CD8-positive, alpha-beta T cell (primary cell): ENCODE measurements at regions of chr2 and their contacts with region 1.

Region 1: GRCh38 chr2:28958689-28959088 is 22.4 kb upstream of the TOGARAM2 start:
- DNase-seq: peak in 8 of 9 experiments; percentile 15 to 78 (median 37)
- ATAC-seq: peak; percentile 56
- H3K4me3 ChIP-seq: no peak overlapping the region
- H3K4me3 Mint-ChIP-seq: no peak overlapping the region
- H3K27ac ChIP-seq: no peak overlapping the region
- H3K27ac Mint-ChIP-seq: no peak overlapping the region
- H3K4me1 ChIP-seq: no peaks in the 10 kb centered on the region
- H3K4me1 Mint-ChIP-seq: peaks cover 8% of the 10 kb centered on the region
- H3K27me3 ChIP-seq: no peaks in the 10 kb centered on the region
- H3K27me3 Mint-ChIP-seq: no peaks in the 10 kb centered on the region
- CTCF ChIP-seq: peak; percentile 75

Region 2: DNA sequence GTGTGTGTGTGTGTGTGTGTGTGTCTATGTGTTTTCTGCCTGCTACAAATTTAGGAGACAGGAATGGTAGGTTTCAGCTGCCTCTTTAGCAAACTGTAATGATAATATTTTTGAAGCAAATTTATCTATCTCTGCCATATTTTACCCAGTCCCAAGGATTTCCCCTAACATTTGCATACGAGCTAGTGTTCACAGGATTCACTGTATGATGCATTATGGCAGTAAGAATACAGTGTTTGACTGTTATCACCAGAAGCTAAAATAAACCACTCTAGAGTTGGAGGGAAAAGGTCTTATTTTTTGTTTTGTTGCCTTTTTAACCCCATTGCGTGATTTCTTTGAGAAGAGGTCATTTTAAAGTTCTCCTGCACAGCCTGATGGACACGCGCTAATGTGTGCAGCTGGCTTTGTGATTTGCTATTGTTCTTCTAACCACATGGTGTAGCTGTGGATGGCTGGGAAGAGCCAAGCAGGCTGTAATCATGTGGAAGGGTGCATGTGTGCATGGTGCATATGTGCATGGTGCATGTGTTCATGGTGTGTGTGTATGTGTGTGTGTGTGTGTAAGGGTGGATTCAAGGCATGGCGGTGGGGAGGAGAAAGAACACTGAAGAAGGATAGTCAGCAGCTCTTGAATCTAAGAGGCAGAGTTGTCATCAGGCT is 400.4 kb before region 1 on chr2:
- CTCF ChIA-PET with region 1: no interaction called
- POLR2A ChIA-PET with region 1: no interaction called
- intact Hi-C with region 1: no loop called
- DNase-seq: no peak
- ATAC-seq: no peak
- H3K4me3 ChIP-seq: no peak overlapping the region
- H3K4me3 Mint-ChIP-seq: no peak overlapping the region
- H3K27ac ChIP-seq: no peak overlapping the region
- H3K27ac Mint-ChIP-seq: no peak overlapping the region
- H3K4me1 ChIP-seq: no peaks in the 10 kb centered on the region
- H3K4me1 Mint-ChIP-seq: no peaks in the 10 kb centered on the region
- H3K27me3 ChIP-seq: no peaks in the 10 kb centered on the region
- H3K27me3 Mint-ChIP-seq: no peaks in the 10 kb centered on the region
- CTCF ChIP-seq: no peak

Region 3: GRCh38 chr2:28764909-28765711 is 193.6 kb before region 1 on chr2:
- CTCF ChIA-PET with region 1: no interaction called
- POLR2A ChIA-PET with region 1: no interaction called
- intact Hi-C with region 1: no loop called
- DNase-seq: no peak
- ATAC-seq: no peak
- H3K4me3 ChIP-seq: no peak overlapping the region
- H3K4me3 Mint-ChIP-seq: no peak overlapping the region
- H3K27ac ChIP-seq: no peak overlapping the region
- H3K27ac Mint-ChIP-seq: no peak overlapping the region
- H3K4me1 ChIP-seq: peaks cover 58% of the 10 kb centered on the region
- H3K4me1 Mint-ChIP-seq: peaks cover 89% of the 10 kb centered on the region
- H3K27me3 ChIP-seq: no peaks in the 10 kb centered on the region
- H3K27me3 Mint-ChIP-seq: no peaks in the 10 kb centered on the region
- CTCF ChIP-seq: no peak

Region 4: GRCh38 chr2:28915939-28916338 is 42.8 kb before region 1 on chr2:
- CTCF ChIA-PET with region 1: no interaction called
- POLR2A ChIA-PET with region 1: no interaction called
- intact Hi-C with region 1: no loop called
- DNase-seq: no peak
- ATAC-seq: no peak
- H3K4me3 ChIP-seq: no peak overlapping the region
- H3K4me3 Mint-ChIP-seq: no peak overlapping the region
- H3K27ac ChIP-seq: no peak overlapping the region
- H3K27ac Mint-ChIP-seq: no peak overlapping the region
- H3K4me1 ChIP-seq: no peaks in the 10 kb centered on the region
- H3K4me1 Mint-ChIP-seq: no peaks in the 10 kb centered on the region
- H3K27me3 ChIP-seq: no peaks in the 10 kb centered on the region
- H3K27me3 Mint-ChIP-seq: no peaks in the 10 kb centered on the region
- CTCF ChIP-seq: no peak

Region 5: GRCh38 chr2:28970469-28971160 is 11.9 kb after region 1 on chr2:
- CTCF ChIA-PET with region 1: interaction called, 22 read pairs
- POLR2A ChIA-PET with region 1: no interaction called
- intact Hi-C with region 1: no loop called
- DNase-seq: no peak
- ATAC-seq: no peak
- H3K4me3 ChIP-seq: no peak overlapping the region
- H3K4me3 Mint-ChIP-seq: no peak overlapping the region
- H3K27ac ChIP-seq: no peak overlapping the region
- H3K27ac Mint-ChIP-seq: no peak overlapping the region
- H3K4me1 ChIP-seq: peaks cover 8% of the 10 kb centered on the region
- H3K4me1 Mint-ChIP-seq: peaks cover 14% of the 10 kb centered on the region
- H3K27me3 ChIP-seq: no peaks in the 10 kb centered on the region
- H3K27me3 Mint-ChIP-seq: no peaks in the 10 kb centered on the region
- CTCF ChIP-seq: no peak

Region 6: GRCh38 chr2:29130295-29130694 is 171.6 kb after region 1 on chr2:
- CTCF ChIA-PET with region 1: interaction called, 5 read pairs
- POLR2A ChIA-PET with region 1: no interaction called
- intact Hi-C with region 1: loop called in 1 of 2 experiments (anchors 5 kb)
- DNase-seq: no peak
- ATAC-seq: no peak
- H3K4me3 ChIP-seq: no peak overlapping the region
- H3K4me3 Mint-ChIP-seq: no peak overlapping the region
- H3K27ac ChIP-seq: no peak overlapping the region
- H3K27ac Mint-ChIP-seq: no peak overlapping the region
- H3K4me1 ChIP-seq: no peaks in the 10 kb centered on the region
- H3K4me1 Mint-ChIP-seq: peaks cover 34% of the 10 kb centered on the region
- H3K27me3 ChIP-seq: no peaks in the 10 kb centered on the region
- H3K27me3 Mint-ChIP-seq: no peaks in the 10 kb centered on the region
- CTCF ChIP-seq: no peak

Region 7: GRCh38 chr2:29206941-29207340 is 248.3 kb after region 1 on chr2:
- CTCF ChIA-PET with region 1: interaction called, 10 read pairs
- POLR2A ChIA-PET with region 1: no interaction called
- intact Hi-C with region 1: no loop called
- DNase-seq: no peak
- ATAC-seq: no peak
- H3K4me3 ChIP-seq: no peak overlapping the region
- H3K4me3 Mint-ChIP-seq: no peak overlapping the region
- H3K27ac ChIP-seq: no peak overlapping the region
- H3K27ac Mint-ChIP-seq: no peak overlapping the region
- H3K4me1 ChIP-seq: no peaks in the 10 kb centered on the region
- H3K4me1 Mint-ChIP-seq: no peaks in the 10 kb centered on the region
- H3K27me3 ChIP-seq: no peaks in the 10 kb centered on the region
- H3K27me3 Mint-ChIP-seq: no peaks in the 10 kb centered on the region
- CTCF ChIP-seq: no peak

Region 8: DNA sequence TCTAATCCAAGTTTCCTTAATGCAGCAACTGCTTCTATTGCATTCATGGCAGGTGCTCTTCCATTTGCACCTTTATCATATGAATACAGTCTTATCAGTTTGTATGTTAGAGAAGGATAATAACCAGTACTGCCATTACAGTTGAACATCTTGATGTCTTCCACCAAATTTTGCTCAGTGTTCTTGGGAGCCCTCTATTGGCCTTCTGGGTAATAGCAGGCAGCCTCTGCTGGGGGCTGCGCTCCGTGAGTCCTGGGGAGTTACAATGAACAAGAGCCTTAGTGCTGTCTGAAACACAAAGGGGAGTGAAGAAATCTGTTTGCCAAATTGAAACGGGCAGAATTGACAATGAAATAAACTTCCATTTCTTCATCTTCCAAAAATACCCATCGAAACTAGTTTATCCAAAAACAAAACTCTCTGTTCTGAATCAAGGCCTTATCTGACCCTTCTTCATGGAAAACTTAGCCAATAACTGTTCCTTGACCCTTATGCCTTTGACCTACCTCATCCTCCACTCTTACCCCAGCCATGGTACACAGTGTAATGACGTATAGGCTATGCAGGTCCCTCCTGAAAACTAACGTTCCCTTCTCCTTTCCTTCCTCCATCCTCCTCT is 882.8 kb after region 1 on chr2:
- CTCF ChIA-PET with region 1: no interaction called
- POLR2A ChIA-PET with region 1: no interaction called
- intact Hi-C with region 1: loop called in 1 of 2 experiments (anchors 5 kb)
- DNase-seq: peak in 3 of 9 experiments; percentile 7 to 38 (median 32)
- ATAC-seq: no peak
- H3K4me3 ChIP-seq: no peak overlapping the region
- H3K4me3 Mint-ChIP-seq: no peak overlapping the region
- H3K27ac ChIP-seq: no peak overlapping the region
- H3K27ac Mint-ChIP-seq: no peak overlapping the region
- H3K4me1 ChIP-seq: no peaks in the 10 kb centered on the region
- H3K4me1 Mint-ChIP-seq: no peaks in the 10 kb centered on the region
- H3K27me3 ChIP-seq: no peaks in the 10 kb centered on the region
- H3K27me3 Mint-ChIP-seq: peaks cover 18% of the 10 kb centered on the region
- CTCF ChIP-seq: peak; percentile 70